ENCODE measurements at regions of chr3 and their contacts with region 1.

Region 1: DNA sequence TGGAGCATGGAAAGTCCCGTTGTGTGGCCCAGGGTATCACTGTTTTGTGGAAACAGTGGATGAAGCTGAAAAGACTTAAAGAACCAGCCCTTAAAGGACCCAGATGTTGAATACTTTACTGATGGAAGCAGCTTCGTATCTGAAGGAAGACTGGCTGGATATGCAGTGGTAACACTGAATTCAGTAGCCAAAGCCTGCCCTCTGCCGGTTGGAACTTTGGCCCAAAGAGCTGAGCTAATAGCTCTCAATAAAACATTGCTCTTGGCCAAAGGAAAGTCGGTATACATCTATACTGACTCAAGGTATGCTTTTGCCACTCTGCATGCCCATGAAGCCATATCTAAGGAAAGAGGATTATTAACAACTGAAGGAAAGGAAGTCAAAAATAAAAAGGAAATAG is 885.4 kb downstream of the PDCD6IP start:
- DNase-seq: peak in 9 of 14 experiments; percentile 2 to 41 (median 15)
- ATAC-seq: no peak
- H3K4me3 ChIP-seq: no peak overlapping the region
- H3K4me3 Mint-ChIP-seq: no peak overlapping the region
- H3K27ac ChIP-seq: no peak overlapping the region
- H3K27ac Mint-ChIP-seq: no peak overlapping the region
- H3K4me1 ChIP-seq: no peaks in the 10 kb centered on the region
- H3K4me1 Mint-ChIP-seq: no peaks in the 10 kb centered on the region
- H3K27me3 ChIP-seq: no peaks in the 10 kb centered on the region
- H3K27me3 Mint-ChIP-seq: no peaks in the 10 kb centered on the region
- CTCF ChIP-seq: no peak

Region 2: GRCh38 chr3:33883538-33883950 is 800.3 kb before region 1 on chr3:
- CTCF ChIA-PET with region 1: interaction called, 4 read pairs
- POLR2A ChIA-PET with region 1: no interaction called
- intact Hi-C with region 1: loop called in 1 of 2 experiments (anchors 2 kb)
- DNase-seq: peak in 5 of 14 experiments; percentile 11 to 69 (median 50)
- ATAC-seq: peak; percentile 26
- H3K4me3 ChIP-seq: no peak overlapping the region
- H3K4me3 Mint-ChIP-seq: no peak overlapping the region
- H3K27ac ChIP-seq: no peak overlapping the region
- H3K27ac Mint-ChIP-seq: no peak overlapping the region
- H3K4me1 ChIP-seq: peaks cover 4% of the 10 kb centered on the region
- H3K4me1 Mint-ChIP-seq: peaks cover 5% of the 10 kb centered on the region
- H3K27me3 ChIP-seq: no peaks in the 10 kb centered on the region
- H3K27me3 Mint-ChIP-seq: peaks cover 3% of the 10 kb centered on the region
- CTCF ChIP-seq: peak; percentile 94

Measured in CD4-positive, alpha-beta T cell (primary cell).